CD8-positive, alpha-beta T cell (primary cell): ENCODE measurements at regions of chr5 and their contacts with region 1.

Region 1: DNA sequence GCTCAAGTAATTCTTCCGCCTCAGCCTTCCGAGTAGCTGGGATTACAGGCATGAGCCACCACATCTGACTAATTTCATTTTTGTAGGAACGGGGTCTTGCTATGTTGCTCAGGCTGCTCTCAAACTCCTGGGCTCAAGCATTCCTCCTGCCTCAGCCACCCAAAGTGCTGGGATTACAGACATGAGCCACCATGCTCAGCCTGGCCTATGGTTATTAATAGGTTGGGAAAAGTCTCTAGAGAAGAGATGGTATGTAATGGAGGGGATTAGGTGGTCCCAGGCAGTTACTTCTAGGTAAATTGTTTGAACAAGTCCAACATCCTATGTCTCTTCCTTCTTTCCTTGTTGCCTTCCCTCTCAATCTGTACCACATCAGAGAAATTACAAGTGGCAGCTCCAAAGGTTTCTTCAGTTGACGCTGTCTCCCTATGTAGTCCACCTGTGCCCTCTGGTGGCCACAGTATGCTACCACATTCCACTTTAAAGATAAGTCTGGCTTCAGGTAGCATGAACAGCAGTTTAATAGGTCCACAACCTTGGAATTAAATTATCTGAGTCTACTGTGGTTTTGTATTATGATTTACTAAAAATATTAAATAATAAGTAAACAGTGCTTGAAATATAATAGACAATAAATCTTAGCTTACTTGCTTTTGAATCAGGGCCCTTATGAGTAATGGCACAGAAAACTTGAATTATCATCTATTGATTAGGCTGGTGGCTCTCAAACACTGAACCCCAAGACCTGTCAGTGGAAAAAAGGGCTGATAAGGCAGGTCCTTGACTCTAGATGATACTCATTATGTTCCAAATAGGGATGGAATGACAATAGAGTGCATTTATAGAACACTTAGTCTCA is 9.7 kb downstream of the TIGD6 start:
- DNase-seq: peak; percentile 35 to 81 (median 67)
- ATAC-seq: peak; percentile 97
- H3K4me3 ChIP-seq: no peak overlapping the region
- H3K4me3 Mint-ChIP-seq: no peak overlapping the region
- H3K27ac ChIP-seq: no peak overlapping the region
- H3K27ac Mint-ChIP-seq: no peak overlapping the region
- H3K4me1 ChIP-seq: no peaks in the 10 kb centered on the region
- H3K4me1 Mint-ChIP-seq: peaks cover 2% of the 10 kb centered on the region
- H3K27me3 ChIP-seq: no peaks in the 10 kb centered on the region
- H3K27me3 Mint-ChIP-seq: no peaks in the 10 kb centered on the region
- CTCF ChIP-seq: peak; percentile 94

Region 2: GRCh38 chr5:149636851-149637246 is 353.9 kb before region 1 on chr5:
- CTCF ChIA-PET with region 1: interaction called, 19 read pairs
- POLR2A ChIA-PET with region 1: no interaction called
- intact Hi-C with region 1: loop called (anchors 1 kb)
- DNase-seq: peak in 5 of 9 experiments; percentile 52 to 79 (median 75)
- ATAC-seq: peak; percentile 67
- H3K4me3 ChIP-seq: no peak overlapping the region
- H3K4me3 Mint-ChIP-seq: no peak overlapping the region
- H3K27ac ChIP-seq: no peak overlapping the region
- H3K27ac Mint-ChIP-seq: no peak overlapping the region
- H3K4me1 ChIP-seq: no peaks in the 10 kb centered on the region
- H3K4me1 Mint-ChIP-seq: no peaks in the 10 kb centered on the region
- H3K27me3 ChIP-seq: no peaks in the 10 kb centered on the region
- H3K27me3 Mint-ChIP-seq: no peaks in the 10 kb centered on the region
- CTCF ChIP-seq: peak; percentile 86

Region 3: DNA sequence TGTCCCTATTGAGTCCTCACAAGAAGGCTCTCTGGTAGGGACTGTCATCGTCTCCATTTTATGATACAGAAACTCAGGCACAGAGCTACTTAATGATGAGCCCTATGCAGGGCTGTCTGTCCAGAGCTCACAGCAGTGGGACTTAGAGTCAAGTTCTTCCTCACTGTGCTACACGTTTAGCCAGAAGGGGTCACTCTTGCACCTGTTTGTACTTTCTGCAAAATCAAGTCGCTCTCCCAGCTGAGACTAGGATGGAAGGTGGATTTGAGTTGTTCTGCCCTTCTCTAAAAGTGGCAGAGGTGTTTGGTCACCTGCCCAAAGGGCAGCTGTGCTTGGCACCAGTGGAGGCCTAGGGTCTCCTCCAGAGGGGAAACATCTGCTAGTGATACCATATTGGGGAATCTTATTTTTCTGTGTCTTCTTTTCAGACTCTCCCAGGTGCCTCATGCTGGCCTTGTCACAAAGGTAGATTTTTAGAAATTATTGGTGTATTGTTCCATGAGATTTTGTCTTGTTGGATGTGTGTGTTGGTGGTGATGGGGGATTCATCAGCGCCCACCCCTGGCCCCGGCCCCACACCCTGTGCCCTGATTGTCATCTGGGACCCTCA is 156.4 kb before region 1 on chr5:
- CTCF ChIA-PET with region 1: interaction called, 126 read pairs
- POLR2A ChIA-PET with region 1: no interaction called
- intact Hi-C with region 1: loop called in 1 of 2 experiments (anchors 1 kb)
- DNase-seq: peak in 8 of 9 experiments; percentile 20 to 75 (median 45)
- ATAC-seq: peak; percentile 62
- H3K4me3 ChIP-seq: no peak overlapping the region
- H3K4me3 Mint-ChIP-seq: no peak overlapping the region
- H3K27ac ChIP-seq: no peak overlapping the region
- H3K27ac Mint-ChIP-seq: no peak overlapping the region
- H3K4me1 ChIP-seq: no peaks in the 10 kb centered on the region
- H3K4me1 Mint-ChIP-seq: no peaks in the 10 kb centered on the region
- H3K27me3 ChIP-seq: no peaks in the 10 kb centered on the region
- H3K27me3 Mint-ChIP-seq: no peaks in the 10 kb centered on the region
- CTCF ChIP-seq: peak; percentile 52

Region 4: GRCh38 chr5:149960272-149961185 is 30.2 kb before region 1 on chr5 and contains the start of gene SLC26A2:
- CTCF ChIA-PET with region 1: interaction called, 26 read pairs
- POLR2A ChIA-PET with region 1: no interaction called
- intact Hi-C with region 1: no loop called
- DNase-seq: peak; percentile 83 to 97 (median 93)
- ATAC-seq: peak; percentile 95
- H3K4me3 ChIP-seq: peak within 1 kb of the TSS; percentile 85 to 99
- H3K4me3 Mint-ChIP-seq: peak within 1 kb of the TSS; percentile 97
- H3K27ac ChIP-seq: peak within 1 kb of the TSS; percentile 66 to 77
- H3K27ac Mint-ChIP-seq: peak within 1 kb of the TSS; percentile 97
- H3K4me1 ChIP-seq: peaks cover 26% of the 10 kb centered on the region
- H3K4me1 Mint-ChIP-seq: peaks cover 39% of the 10 kb centered on the region
- H3K27me3 ChIP-seq: no peaks in the 10 kb centered on the region
- H3K27me3 Mint-ChIP-seq: no peaks in the 10 kb centered on the region
- CTCF ChIP-seq: no peak
- total RNA-seq, gene SLC26A2: 2.0 to 2.2 TPM

Region 5: DNA sequence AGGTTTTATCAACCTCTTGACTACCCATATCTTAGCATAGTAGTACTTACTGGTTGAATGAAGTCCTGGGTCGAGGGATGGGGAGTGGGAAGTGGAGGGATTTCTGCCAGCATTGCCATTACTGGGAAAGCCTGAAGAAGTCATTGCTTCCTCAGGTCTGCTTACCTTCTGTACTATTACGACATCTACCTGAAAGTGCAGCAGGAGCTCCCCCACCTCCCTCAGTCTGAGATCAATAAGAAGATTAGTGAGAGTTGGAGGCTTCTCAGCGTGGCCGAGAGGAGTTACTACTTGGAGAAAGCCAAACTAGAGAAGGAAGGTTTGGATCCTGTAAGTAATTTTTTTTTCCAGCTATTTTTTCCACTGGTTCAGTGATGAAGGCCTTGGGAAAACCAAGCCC is 15.6 kb after region 1 on chr5:
- CTCF ChIA-PET with region 1: interaction called, 24 read pairs
- POLR2A ChIA-PET with region 1: no interaction called
- intact Hi-C with region 1: no loop called
- DNase-seq: no peak
- ATAC-seq: no peak
- H3K4me3 ChIP-seq: no peak overlapping the region
- H3K4me3 Mint-ChIP-seq: no peak overlapping the region
- H3K27ac ChIP-seq: no peak overlapping the region
- H3K27ac Mint-ChIP-seq: no peak overlapping the region
- H3K4me1 ChIP-seq: peaks cover 13% of the 10 kb centered on the region
- H3K4me1 Mint-ChIP-seq: peaks cover 34% of the 10 kb centered on the region
- H3K27me3 ChIP-seq: no peaks in the 10 kb centered on the region
- H3K27me3 Mint-ChIP-seq: no peaks in the 10 kb centered on the region
- CTCF ChIP-seq: no peak